T-cell (primary cell): ENCODE measurements at regions of chr1 and their contacts with region 1.

Region 1: DNA sequence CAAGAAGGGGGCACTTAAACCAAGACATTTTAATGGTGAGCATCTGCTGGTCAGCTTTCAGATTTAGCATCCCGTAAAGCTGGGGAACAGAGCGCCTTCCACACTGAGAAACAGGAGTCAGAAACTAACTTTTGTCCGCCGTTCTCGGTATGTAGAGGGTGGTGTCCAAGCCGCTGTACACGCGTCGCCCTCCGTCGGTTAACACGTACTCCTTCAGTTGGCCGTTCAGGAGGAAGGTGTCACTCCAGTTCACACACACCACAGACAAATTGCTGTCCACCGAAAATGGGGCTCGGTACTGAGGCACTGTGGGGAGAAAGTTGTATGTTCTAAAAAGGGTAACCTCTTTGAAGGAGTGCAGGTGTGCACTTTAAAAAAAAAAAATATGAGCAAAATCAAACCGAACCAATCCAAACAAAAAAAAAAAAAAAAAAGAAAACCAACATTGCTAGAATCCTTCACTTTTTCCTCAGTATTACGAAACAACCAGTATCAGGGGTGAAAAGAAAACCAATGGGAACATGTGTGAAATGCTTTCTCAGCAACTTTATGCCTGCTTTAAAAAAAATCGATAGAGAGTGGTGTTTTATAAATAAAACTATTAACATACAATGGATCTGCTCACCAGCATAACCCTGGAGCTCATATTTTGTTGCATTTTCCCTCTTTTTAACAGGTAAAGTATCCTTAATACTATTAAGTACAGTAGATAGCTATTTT is 73.5 kb downstream of the KCTD3 start:
- DNase-seq: no peak
- ATAC-seq: no peak
- H3K4me3 ChIP-seq: no peak overlapping the region
- H3K4me3 Mint-ChIP-seq: no peak overlapping the region
- H3K27ac ChIP-seq: no peak overlapping the region
- H3K27ac Mint-ChIP-seq: no peak overlapping the region
- H3K4me1 ChIP-seq: no peaks in the 10 kb centered on the region
- H3K4me1 Mint-ChIP-seq: no peaks in the 10 kb centered on the region
- H3K27me3 ChIP-seq: peaks cover 0 to 2% of the 10 kb centered on the region in 2 experiments
- H3K27me3 Mint-ChIP-seq: peaks cover 1 to 4% of the 10 kb centered on the region in 2 donors

Region 2: GRCh38 chr1:215458104-215458503 is 182.5 kb before region 1 on chr1:
- CTCF ChIA-PET with region 1: no interaction called
- POLR2A ChIA-PET with region 1: interaction called in 1 of 2 experiments, 16 read pairs
- DNase-seq: no peak
- ATAC-seq: no peak
- H3K4me3 ChIP-seq: no peak overlapping the region
- H3K4me3 Mint-ChIP-seq: no peak overlapping the region
- H3K27ac ChIP-seq: no peak overlapping the region
- H3K27ac Mint-ChIP-seq: no peak overlapping the region
- H3K4me1 ChIP-seq: no peaks in the 10 kb centered on the region
- H3K4me1 Mint-ChIP-seq: no peaks in the 10 kb centered on the region
- H3K27me3 ChIP-seq: no peaks in the 10 kb centered on the region
- H3K27me3 Mint-ChIP-seq: no peaks in the 10 kb centered on the region

Region 3: DNA sequence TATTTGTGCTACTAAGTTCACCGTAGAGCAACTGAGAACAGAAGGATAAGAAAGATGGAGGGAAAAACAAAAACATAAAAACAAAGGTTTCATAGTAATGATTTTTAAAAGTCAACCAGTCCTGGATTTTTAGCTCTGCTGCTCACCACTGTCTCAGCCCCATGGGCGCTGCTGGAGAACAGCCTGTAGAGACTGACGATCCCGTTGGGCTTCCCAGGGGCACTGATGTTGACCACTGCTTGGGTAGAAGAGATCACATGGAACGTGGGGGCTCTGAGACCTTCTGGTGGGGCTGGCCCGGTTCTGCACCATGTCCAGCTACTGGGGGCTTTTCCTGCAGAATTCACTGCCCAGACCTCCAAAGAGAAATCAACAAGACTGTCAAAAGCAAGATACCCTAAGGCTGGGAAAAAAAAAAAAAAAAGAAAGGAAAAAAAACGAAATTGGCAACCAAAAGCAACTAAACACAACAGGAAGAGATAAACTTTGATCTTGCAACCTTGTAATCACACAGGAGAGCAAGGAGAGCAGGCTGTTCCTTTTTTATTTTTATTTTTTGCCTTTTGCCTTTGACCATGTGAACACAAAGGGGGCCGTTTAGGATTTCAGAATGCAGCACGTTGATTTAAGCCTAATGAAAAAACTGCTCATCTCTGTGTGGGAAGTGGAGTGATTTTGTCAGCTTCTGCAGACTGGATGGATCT is 10.0 kb after region 1 on chr1:
- CTCF ChIA-PET with region 1: no interaction called
- POLR2A ChIA-PET with region 1: no interaction called
- DNase-seq: no peak
- ATAC-seq: no peak
- H3K4me3 ChIP-seq: no peak overlapping the region
- H3K4me3 Mint-ChIP-seq: no peak overlapping the region
- H3K27ac ChIP-seq: no peak overlapping the region
- H3K27ac Mint-ChIP-seq: no peak overlapping the region
- H3K4me1 ChIP-seq: no peaks in the 10 kb centered on the region
- H3K4me1 Mint-ChIP-seq: no peaks in the 10 kb centered on the region
- H3K27me3 ChIP-seq: no peaks in the 10 kb centered on the region
- H3K27me3 Mint-ChIP-seq: peaks cover 0 to 8% of the 10 kb centered on the region in 2 donors

Region 4: DNA sequence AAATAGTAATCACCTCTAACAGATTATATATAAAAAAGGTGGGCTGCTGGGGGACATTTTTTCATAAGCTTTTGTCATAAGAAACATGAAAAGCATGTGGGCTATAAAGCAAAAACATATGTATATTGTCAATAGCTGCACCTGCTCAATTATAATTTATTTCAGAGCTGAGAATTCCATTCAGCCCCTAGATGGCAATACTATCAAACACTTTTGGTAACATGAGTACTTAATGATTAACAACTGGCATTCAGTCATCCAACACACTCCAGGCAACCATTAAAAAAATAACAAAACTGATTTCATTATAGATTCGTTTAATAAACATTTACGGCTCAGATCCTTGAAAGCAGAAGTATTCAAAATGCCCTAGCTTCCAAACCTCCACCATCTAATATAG is 41.6 kb after region 1 on chr1:
- CTCF ChIA-PET with region 1: no interaction called
- POLR2A ChIA-PET with region 1: no interaction called
- DNase-seq: no peak
- ATAC-seq: no peak
- H3K4me3 ChIP-seq: no peak overlapping the region
- H3K4me3 Mint-ChIP-seq: no peak overlapping the region
- H3K27ac ChIP-seq: no peak overlapping the region
- H3K27ac Mint-ChIP-seq: no peak overlapping the region
- H3K4me1 ChIP-seq: no peaks in the 10 kb centered on the region
- H3K4me1 Mint-ChIP-seq: no peaks in the 10 kb centered on the region
- H3K27me3 ChIP-seq: no peaks in the 10 kb centered on the region
- H3K27me3 Mint-ChIP-seq: no peaks in the 10 kb centered on the region

Region 5: GRCh38 chr1:216075339-216075738 is 434.8 kb after region 1 on chr1:
- CTCF ChIA-PET with region 1: no interaction called
- POLR2A ChIA-PET with region 1: no interaction called
- DNase-seq: no peak
- ATAC-seq: no peak
- H3K4me3 ChIP-seq: no peak overlapping the region
- H3K4me3 Mint-ChIP-seq: no peak overlapping the region
- H3K27ac ChIP-seq: no peak overlapping the region
- H3K27ac Mint-ChIP-seq: no peak overlapping the region
- H3K4me1 ChIP-seq: no peaks in the 10 kb centered on the region
- H3K4me1 Mint-ChIP-seq: no peaks in the 10 kb centered on the region
- H3K27me3 ChIP-seq: no peaks in the 10 kb centered on the region
- H3K27me3 Mint-ChIP-seq: no peaks in the 10 kb centered on the region